Body of pancreas (tissue), 4 donors: ENCODE measurements at regions of chr1 and their contacts with region 1.

Region 1: DNA sequence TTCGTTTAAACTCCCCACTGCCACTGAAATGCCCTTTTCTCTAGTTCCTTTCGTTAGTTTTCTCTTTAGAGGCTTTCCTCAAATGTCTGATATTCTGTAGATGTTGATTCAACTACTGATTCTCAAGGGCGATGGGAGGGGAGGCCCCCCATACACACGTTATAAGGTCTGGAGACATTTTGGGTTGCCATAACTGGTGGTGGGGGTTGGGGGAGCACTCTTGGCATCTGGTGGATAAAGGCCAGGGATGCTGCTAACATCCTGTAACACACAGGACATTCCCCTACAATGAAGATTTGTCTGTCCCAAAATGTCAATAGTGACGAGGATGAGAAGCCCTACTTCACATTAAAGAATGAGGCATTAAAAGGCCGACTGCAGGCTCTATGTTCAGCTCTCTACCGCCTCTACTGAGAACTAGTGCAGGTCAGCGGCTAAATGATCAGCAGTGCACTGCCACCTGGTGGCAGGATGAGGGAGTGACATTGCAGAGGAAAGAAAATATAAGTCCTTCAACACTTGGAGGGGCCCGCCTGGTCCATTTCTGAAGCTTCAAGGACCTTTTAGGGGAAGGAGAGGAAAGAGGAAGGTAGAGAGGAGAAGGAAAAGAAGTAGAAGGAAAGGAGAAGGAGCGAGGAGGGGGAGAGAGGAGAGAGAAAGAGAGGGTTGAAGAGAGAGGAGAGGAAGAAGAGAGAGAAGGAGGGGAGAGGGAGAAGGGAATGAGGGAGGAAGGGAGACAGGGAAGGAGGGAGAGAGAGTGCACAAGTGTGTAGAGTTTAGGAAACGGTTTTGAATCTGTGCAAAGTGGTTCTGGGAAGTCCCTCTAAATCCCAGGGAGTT is 29.4 kb downstream of the ALG14 start:
- DNase-seq: peak; percentile 85 to 90 (median 88)
- ATAC-seq: peak; percentile 92
- H3K4me3 ChIP-seq: no peak overlapping the region
- H3K27ac ChIP-seq: peak overlapping the region in 1 of 4 donors; percentile 44
- H3K4me1 ChIP-seq: peaks cover 18% of the 10 kb centered on the region
- H3K27me3 ChIP-seq: no peaks in the 10 kb centered on the region
- CTCF ChIP-seq: peak; percentile 91 to 100 (median 99)
- POLR2A ChIP-seq: no peak

Region 2: DNA sequence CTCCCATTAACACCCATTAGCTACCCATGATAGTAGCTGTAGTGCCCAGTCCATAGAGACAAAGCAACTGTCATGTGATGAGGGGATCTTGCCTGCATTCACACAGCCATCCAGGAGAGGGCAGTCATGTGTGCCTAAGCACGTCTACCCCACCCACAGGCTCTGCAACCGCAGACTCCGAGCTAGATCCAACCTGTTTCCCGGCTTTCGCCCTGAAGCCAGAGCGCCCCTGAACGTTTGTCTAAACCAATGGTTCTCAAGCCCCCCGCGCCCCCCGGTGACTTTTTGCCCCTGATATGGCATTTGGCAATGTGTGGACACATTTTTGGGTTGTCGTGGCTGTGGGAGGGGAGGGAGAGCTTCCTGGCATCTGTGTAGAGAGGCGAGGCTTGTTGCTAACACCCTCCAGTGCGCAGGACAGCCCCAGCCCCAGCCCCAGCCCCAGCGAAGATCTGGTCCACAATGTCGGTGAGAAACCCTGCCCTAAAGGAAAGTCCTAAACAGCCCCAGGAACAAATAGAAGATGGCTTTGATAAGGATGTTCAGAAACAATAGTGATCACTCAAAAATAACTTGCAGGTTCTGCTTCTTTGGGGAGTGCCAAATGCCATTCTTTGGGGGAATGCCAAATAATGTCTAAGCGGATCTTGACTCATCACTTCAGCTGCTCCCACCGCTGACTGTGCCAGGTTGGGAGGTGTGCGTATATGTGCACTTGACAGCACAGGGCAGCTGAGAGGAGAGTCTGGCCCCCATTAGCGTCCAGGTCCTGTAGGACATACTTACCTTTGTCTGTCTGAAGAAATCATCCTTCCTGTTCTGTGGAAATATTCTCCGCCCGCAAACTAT is 188.7 kb before region 1 on chr1:
- intact Hi-C with region 1: loop called (anchors 5 kb)
- DNase-seq: peak; percentile 87 to 92 (median 90)
- ATAC-seq: peak; percentile 98
- H3K4me3 ChIP-seq: peak overlapping the region in 1 of 2 donors; percentile 4
- H3K27ac ChIP-seq: peak overlapping the region; percentile 27 to 84 (median 72)
- H3K4me1 ChIP-seq: peaks cover 18% of the 10 kb centered on the region
- H3K27me3 ChIP-seq: no peaks in the 10 kb centered on the region
- CTCF ChIP-seq: peak; percentile 68 to 98 (median 96)
- POLR2A ChIP-seq: no peak

Region 3: DNA sequence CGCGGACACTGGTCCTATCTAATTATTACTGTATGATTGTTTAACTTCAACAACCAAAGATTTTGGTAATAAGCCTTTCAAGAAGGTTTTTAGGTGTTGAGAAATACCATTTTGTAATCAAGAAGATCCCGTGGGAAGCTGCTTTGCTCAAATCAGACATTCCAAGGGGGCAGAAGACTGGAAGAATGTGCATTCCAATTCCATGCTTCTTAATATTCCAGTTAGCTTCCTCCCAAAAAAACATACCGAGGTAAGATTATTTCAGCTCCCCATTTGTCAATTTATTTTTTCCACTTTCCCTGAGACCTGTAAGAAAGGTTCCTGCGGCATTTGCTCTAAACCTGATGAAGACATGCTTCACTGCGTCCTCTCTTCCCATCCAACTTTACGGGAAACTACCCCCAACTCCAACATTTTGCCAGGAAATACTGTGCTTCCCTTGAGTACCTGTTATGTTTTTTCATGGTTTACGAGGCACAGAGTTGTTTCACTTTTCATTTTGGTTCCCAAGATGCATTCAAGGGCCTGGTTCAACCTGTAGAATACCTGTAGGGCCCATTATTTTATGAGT is 120.5 kb before region 1 on chr1:
- intact Hi-C with region 1: no loop called
- DNase-seq: no peak
- ATAC-seq: no peak
- H3K4me3 ChIP-seq: no peak overlapping the region
- H3K27ac ChIP-seq: peak overlapping the region; percentile 1 to 90 (median 22)
- H3K4me1 ChIP-seq: peaks cover 55% of the 10 kb centered on the region
- H3K27me3 ChIP-seq: no peaks in the 10 kb centered on the region
- CTCF ChIP-seq: no peak
- POLR2A ChIP-seq: no peak

Region 4: GRCh38 chr1:94983171-94983739 is 60.1 kb before region 1 on chr1:
- intact Hi-C with region 1: no loop called
- DNase-seq: peak in 1 of 4 donors; percentile 33
- ATAC-seq: no peak
- H3K4me3 ChIP-seq: no peak overlapping the region
- H3K27ac ChIP-seq: no peak overlapping the region
- H3K4me1 ChIP-seq: no peaks in the 10 kb centered on the region
- H3K27me3 ChIP-seq: no peaks in the 10 kb centered on the region
- CTCF ChIP-seq: no peak
- POLR2A ChIP-seq: no peak

Region 5: GRCh38 chr1:95095833-95096217 is 52.5 kb after region 1 on chr1:
- intact Hi-C with region 1: no loop called
- DNase-seq: no peak
- ATAC-seq: no peak
- H3K4me3 ChIP-seq: no peak overlapping the region
- H3K27ac ChIP-seq: no peak overlapping the region
- H3K4me1 ChIP-seq: no peaks in the 10 kb centered on the region
- H3K27me3 ChIP-seq: no peaks in the 10 kb centered on the region
- CTCF ChIP-seq: no peak
- POLR2A ChIP-seq: no peak